ENCODE measurements at regions of chr16 and their contacts with region 1.

Region 1: GRCh38 chr16:27564224-27564623 is 14.3 kb downstream of the KATNIP start:
- DNase-seq: no peak
- ATAC-seq: no peak
- H3K4me3 ChIP-seq: no peak overlapping the region
- H3K27ac ChIP-seq: no peak overlapping the region
- H3K4me1 ChIP-seq: peaks cover 6 to 12% of the 10 kb centered on the region in 2 experiments
- H3K27me3 ChIP-seq: no peaks in the 10 kb centered on the region
- CTCF ChIP-seq: no peak
- EP300 ChIP-seq: no peak
- POLR2A ChIP-seq: no peak
- RAD21 ChIP-seq: no peak

Region 2: GRCh38 chr16:27529962-27530361 is 34.3 kb before region 1 on chr16:
- CTCF ChIA-PET with region 1: no interaction called
- POLR2A ChIA-PET with region 1: no interaction called
- in situ Hi-C with region 1: no loop called
- intact Hi-C with region 1: no loop called
- DNase-seq: no peak
- ATAC-seq: no peak
- H3K4me3 ChIP-seq: no peak overlapping the region
- H3K27ac ChIP-seq: no peak overlapping the region
- H3K4me1 ChIP-seq: no peaks in the 10 kb centered on the region
- H3K27me3 ChIP-seq: no peaks in the 10 kb centered on the region
- CTCF ChIP-seq: no peak
- EP300 ChIP-seq: no peak
- POLR2A ChIP-seq: no peak
- RAD21 ChIP-seq: no peak

Region 3: DNA sequence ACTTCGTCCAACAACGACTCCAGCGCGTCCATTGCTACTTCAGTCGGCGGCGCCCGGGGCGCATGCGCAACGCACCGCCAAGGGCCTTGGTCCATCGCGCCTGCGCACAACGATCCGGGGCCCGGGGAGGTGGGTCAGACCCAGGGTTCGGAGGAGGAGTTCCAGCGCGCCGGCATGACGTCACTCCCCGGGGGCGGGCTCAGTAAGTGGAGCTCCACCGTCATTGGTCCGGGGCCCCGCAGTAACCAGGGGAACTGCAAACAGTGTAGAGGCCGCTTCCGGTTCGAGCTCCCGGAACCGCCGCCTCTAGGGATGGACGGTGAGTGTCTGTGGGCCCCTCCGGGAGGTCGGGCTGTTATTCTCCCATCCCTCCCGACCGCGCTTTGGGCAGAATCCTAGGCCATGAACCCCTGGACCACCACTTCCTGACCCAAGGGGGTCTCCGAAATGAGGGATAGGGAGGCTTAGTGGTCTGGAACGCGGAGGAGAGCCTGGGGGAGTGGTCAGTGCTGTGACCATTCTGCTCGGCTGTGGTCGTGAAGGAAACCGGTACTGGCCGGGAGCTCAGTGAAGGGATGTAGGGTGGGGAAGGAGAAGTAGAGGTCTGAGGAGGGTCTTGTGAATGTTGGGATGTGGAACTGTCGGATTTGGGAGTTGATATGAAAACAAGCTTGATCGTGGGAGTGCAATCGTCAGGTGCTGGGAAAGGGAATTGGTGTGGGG is 14.2 kb before region 1 on chr16 and contains the starts of genes GTF3C1 and KATNIP:
- CTCF ChIA-PET with region 1: no interaction called
- POLR2A ChIA-PET with region 1: interaction called, 11 read pairs
- in situ Hi-C with region 1: no loop called
- intact Hi-C with region 1: no loop called
- DNase-seq: peak; percentile 99 to 100 (median 100)
- ATAC-seq: peak; percentile 98
- H3K4me3 ChIP-seq: peak within 1 kb of the TSS; percentile 92
- H3K27ac ChIP-seq: peak within 1 kb of the TSS; percentile 56
- H3K4me1 ChIP-seq: peaks cover 21 to 23% of the 10 kb centered on the region in 2 experiments
- H3K27me3 ChIP-seq: no peaks in the 10 kb centered on the region
- CTCF ChIP-seq: no peak; a peak in 1 of 6 replicates
- EP300 ChIP-seq: no peak
- POLR2A ChIP-seq: peak; percentile 81
- RAD21 ChIP-seq: no peak
- polyA plus RNA-seq, gene GTF3C1: 0.72 to 2.5 TPM
- polyA plus RNA-seq, gene KATNIP: 1.7 to 2.6 TPM

Region 4: DNA sequence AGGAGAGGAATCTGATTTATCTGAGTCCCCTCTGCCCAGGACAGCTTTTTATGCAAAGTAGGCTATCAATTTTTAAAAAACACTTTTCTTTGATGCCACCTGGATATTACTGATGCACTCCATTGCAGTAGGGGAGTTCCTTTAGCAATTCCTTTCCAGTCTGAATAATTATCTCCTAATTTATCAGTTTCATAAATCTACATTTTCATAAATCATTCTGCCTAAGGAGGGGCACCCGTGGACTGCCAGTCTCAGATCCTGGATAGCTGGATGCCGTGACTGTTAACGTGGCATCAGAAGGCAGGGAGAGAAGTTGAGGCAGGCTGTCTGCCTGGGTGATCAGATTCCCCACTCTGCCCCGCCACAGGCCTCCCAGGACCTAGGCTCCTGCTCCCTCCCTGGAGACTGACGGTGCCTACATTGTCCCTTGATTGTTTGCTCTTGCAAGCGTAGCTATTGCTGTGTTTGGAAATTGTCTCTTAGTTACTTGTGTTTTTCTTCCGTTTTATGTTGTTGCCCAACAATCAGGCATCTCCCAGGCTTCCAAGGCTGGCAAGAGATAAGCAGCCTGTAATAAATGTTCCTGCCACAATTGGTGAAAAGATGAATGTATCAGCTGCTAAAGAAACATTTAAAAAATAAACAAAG is 61.0 kb after region 1 on chr16:
- CTCF ChIA-PET with region 1: no interaction called
- POLR2A ChIA-PET with region 1: no interaction called
- in situ Hi-C with region 1: no loop called
- intact Hi-C with region 1: no loop called
- DNase-seq: no peak
- ATAC-seq: no peak
- H3K4me3 ChIP-seq: no peak overlapping the region
- H3K27ac ChIP-seq: no peak overlapping the region
- H3K4me1 ChIP-seq: no peaks in the 10 kb centered on the region; a peak in 1 of 5 replicates
- H3K27me3 ChIP-seq: no peaks in the 10 kb centered on the region
- CTCF ChIP-seq: no peak
- EP300 ChIP-seq: no peak
- POLR2A ChIP-seq: no peak
- RAD21 ChIP-seq: no peak